GM18951 (cell line): ENCODE measurements at regions of chr19 and their contacts with region 1.

Region 1: GRCh38 chr19:44723952-44724319 is 24.6 kb upstream of the BCL3 start:
- POLR2A ChIP-seq: no peak

Region 2: GRCh38 chr19:44374789-44375188 is 349.1 kb before region 1 on chr19:
- in situ Hi-C with region 1: no loop called
- POLR2A ChIP-seq: no peak

Region 3: DNA sequence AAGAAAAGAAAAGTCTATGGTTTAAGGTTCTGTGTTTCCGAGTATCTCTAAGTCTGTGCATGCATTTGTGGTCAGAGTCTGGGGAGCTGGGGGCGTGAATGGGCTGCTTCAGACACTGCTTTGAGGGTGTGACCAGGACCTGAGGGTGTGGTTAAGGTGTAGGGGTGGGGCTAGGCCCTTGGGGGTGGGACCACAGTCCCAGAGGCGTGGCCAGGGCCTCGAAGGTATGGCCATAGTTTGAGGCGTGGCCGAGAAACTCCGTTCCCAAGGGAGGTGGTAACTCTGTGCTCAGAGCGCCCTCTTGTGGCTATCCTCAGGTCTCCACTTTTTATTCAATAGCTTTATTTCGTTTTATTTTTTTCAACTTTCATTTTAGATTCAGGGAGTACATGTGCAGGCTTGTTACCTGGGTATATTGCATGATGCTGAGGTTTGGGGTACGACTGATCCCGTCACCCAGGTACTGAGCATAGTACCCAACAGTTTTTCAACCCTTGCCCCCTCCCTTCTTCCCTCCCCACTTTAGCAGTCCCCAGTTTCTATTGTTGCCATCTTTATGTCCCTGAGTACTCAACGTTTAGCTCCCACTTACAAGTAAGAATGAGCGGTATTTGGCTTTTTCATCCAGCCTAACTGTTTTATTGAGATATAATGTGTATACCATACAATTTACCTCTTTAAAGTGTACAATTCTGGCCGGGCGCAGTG is 46.8 kb after region 1 on chr19:
- in situ Hi-C with region 1: loop called (anchors 10 kb)
- POLR2A ChIP-seq: no peak